ENCODE measurements at regions of chr1 and their contacts with region 1.

Region 1: GRCh38 chr1:154272217-154272998 is at the start of gene HAX1:
- DNase-seq: peak; percentile 82 to 90
- ATAC-seq: peak; percentile 88 to 92
- H3K4me3 ChIP-seq: peak within 1 kb of the TSS; percentile 75 to 98 (median 84)
- H3K27ac ChIP-seq: peak within 1 kb of the TSS; percentile 87 to 93 (median 90)
- H3K4me1 ChIP-seq: peaks cover 7 to 11% of the 10 kb centered on the region in 2 donors
- H3K27me3 ChIP-seq: no peaks in the 10 kb centered on the region
- CTCF ChIP-seq: peak; percentile 82 to 94 (median 87)
- POLR2A ChIP-seq: peak; percentile 52 to 59
- total RNA-seq, gene HAX1: 145 to 205 (median 177) TPM

Region 2: DNA sequence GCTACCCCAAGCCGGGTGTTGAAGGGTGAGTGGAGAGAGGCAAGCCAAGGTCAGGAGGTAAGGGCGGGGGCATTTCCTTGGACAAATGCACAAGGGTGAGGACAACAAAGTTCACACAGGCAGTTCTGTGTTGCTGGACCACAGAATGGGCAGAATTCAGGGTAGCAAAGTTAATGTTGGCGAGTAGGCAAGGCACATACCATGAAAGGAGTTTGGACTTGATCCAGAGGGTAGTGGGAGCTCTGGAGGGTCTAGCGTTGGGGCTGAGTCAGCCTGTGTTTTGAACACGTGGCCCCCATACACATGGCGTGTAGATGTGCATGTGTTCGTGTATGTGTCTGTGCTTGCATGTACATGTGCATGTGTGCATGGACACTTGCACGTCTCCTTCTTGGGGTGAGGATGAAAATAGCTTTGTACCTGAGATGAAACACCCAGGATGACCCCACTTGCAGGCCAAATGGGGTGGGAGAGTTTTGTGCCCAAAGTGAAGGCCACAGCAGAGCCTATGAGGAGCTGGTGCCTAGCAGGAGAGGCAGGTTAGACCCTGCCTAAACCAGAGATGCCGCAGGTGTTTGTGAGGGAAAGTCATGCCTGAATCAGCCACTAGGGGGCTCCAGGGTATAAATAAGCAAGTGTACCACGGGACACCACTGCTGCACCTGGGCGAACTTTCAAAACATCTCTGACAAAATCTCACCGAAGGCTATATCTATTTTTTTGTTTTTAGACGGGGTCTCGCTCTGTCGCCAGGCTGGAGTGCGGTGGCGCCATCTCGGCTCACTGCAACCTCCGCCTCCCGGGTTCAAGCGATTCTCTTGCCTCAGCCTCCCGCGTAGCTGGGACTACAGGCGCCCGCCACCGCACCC is 475.4 kb before region 1 on chr1:
- in situ Hi-C with region 1: no loop called
- intact Hi-C with region 1: loop called (anchors 5 kb)
- DNase-seq: peak; percentile 62 to 81
- ATAC-seq: peak; percentile 89 to 91
- H3K4me3 ChIP-seq: no peak overlapping the region
- H3K27ac ChIP-seq: no peak overlapping the region
- H3K4me1 ChIP-seq: no peaks in the 10 kb centered on the region
- H3K27me3 ChIP-seq: no peaks in the 10 kb centered on the region
- CTCF ChIP-seq: peak; percentile 86 to 98 (median 94)
- POLR2A ChIP-seq: no peak

Region 3: GRCh38 chr1:154129391-154129970 is 142.9 kb before region 1 on chr1:
- in situ Hi-C with region 1: no loop called
- intact Hi-C with region 1: no loop called
- DNase-seq: no peak
- ATAC-seq: no peak
- H3K4me3 ChIP-seq: no peak overlapping the region
- H3K27ac ChIP-seq: no peak overlapping the region
- H3K4me1 ChIP-seq: no peaks in the 10 kb centered on the region
- H3K27me3 ChIP-seq: no peaks in the 10 kb centered on the region
- CTCF ChIP-seq: no peak
- POLR2A ChIP-seq: no peak

Region 4: DNA sequence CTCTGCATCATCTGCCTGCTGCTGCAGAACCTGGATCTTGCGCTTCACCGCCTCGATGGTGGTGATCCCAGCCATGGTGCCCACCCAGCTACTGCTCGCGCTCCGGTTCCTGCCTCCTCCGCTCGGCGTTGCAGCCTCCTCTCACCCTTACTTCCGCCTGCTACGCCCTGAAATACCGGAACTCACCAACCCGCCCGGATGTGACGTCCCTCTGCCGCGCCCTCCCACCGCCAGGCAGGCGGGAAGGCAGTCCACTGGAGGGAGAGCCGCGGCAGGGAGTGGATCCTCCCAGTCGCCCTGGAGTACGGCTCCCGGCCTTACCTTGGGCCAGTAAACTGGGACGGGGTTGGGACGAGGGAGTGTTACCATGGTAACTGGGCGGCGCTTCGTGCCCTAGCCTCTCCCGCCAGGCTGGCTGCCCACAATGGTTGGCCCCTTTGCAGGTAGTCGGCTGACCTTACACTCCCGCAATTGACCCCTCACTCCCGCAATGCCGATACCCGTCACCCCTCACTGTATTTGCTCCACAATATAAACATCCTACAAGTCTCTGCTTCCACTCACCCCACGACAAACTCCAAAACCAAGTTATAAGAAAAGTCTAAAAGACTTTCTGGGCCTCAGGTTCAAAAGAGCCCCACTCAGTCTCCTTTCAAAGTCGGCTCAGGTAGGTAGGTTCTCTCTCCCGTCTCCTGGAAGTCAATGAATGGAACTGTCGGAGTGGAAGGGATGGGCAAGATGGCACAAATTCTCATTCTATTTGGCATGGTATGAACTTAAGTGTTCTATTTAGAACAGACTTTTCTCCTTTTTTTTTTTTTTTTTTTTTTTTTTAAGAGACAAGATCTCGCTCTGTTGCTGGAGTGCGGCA is 89.1 kb before region 1 on chr1:
- in situ Hi-C with region 1: loop called in 1 of 4 experiments (anchors 10 kb)
- intact Hi-C with region 1: loop called (anchors 1 kb)
- DNase-seq: peak; percentile 88 to 92
- ATAC-seq: peak; percentile 73 to 83
- H3K4me3 ChIP-seq: peak overlapping the region; percentile 69 to 89 (median 82)
- H3K27ac ChIP-seq: peak overlapping the region; percentile 86 to 93 (median 90)
- H3K4me1 ChIP-seq: peaks cover 60 to 61% of the 10 kb centered on the region in 2 donors
- H3K27me3 ChIP-seq: no peaks in the 10 kb centered on the region
- CTCF ChIP-seq: peak in 1 of 5 experiments; percentile 35
- POLR2A ChIP-seq: peak; percentile 94 to 96

Region 5: GRCh38 chr1:154198756-154199562 is 73.4 kb before region 1 on chr1:
- in situ Hi-C with region 1: loop called in 2 of 4 experiments (anchors 10 kb)
- intact Hi-C with region 1: loop called (anchors 1 kb)
- DNase-seq: no peak
- ATAC-seq: peak; percentile 50 to 59
- H3K4me3 ChIP-seq: no peak overlapping the region
- H3K27ac ChIP-seq: peak overlapping the region; percentile 86 to 93 (median 90)
- H3K4me1 ChIP-seq: peaks cover 7 to 13% of the 10 kb centered on the region in 2 donors
- H3K27me3 ChIP-seq: no peaks in the 10 kb centered on the region
- CTCF ChIP-seq: peak in 3 of 5 experiments; percentile 39 to 58 (median 51)
- POLR2A ChIP-seq: no peak

Region 6: DNA sequence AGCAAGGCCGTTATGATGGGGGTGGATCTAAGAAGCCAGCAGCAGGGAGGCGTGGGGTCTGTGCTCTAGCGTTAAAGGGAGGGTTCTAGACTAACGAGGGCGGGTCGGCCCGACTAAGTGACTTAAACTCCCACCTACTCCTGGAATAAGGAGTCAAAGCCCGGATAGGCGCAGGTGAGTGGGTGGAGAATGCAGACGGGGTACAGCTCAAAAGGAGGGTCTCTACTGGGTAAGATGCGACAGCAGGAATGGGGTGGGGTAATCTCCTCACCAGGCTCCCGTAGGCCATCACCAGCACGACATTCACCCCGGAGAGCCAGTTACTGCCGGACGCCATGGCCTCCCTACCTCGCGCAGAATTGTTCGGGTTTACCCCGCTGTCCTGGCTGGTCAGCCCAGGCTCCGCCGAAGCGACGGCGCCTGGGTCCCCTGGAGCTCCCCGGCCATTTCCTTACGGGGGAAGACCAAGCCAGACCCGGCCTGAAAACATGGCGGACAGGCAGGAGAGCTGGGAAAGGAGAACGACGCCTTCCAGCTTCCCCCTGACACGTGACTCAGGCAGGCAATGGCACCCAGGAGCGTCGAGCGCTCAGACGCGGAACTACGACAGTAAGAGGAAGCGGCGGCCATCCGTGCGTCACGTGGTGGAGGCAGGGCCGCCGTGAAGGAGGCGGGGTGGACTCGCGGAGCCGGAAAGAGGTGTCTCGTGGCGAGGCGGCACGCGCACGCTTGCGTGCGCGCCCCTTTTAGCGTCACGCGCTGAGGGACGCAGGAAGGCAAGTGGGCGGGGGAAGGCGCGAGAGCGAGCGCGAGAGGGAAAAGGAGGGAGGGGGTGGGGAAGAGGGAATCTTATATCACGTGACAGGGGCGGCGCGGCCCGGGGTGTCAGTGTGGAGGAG is 52.1 kb before region 1 on chr1 and contains the start of gene UBAP2L:
- in situ Hi-C with region 1: loop called in 1 of 4 experiments (anchors 10 kb)
- intact Hi-C with region 1: loop called (anchors 10 kb)
- DNase-seq: peak; percentile 99
- ATAC-seq: peak; percentile 91 to 93
- H3K4me3 ChIP-seq: peak within 1 kb of the TSS; percentile 82 to 96 (median 88)
- H3K27ac ChIP-seq: peak within 1 kb of the TSS; percentile 96 to 100 (median 98)
- H3K4me1 ChIP-seq: peaks cover 57 to 63% of the 10 kb centered on the region in 2 donors
- H3K27me3 ChIP-seq: no peaks in the 10 kb centered on the region
- CTCF ChIP-seq: no peak
- POLR2A ChIP-seq: peak; percentile 87 to 92
- total RNA-seq, gene UBAP2L: 38.5 to 72.8 (median 50.8) TPM

Region 7: DNA sequence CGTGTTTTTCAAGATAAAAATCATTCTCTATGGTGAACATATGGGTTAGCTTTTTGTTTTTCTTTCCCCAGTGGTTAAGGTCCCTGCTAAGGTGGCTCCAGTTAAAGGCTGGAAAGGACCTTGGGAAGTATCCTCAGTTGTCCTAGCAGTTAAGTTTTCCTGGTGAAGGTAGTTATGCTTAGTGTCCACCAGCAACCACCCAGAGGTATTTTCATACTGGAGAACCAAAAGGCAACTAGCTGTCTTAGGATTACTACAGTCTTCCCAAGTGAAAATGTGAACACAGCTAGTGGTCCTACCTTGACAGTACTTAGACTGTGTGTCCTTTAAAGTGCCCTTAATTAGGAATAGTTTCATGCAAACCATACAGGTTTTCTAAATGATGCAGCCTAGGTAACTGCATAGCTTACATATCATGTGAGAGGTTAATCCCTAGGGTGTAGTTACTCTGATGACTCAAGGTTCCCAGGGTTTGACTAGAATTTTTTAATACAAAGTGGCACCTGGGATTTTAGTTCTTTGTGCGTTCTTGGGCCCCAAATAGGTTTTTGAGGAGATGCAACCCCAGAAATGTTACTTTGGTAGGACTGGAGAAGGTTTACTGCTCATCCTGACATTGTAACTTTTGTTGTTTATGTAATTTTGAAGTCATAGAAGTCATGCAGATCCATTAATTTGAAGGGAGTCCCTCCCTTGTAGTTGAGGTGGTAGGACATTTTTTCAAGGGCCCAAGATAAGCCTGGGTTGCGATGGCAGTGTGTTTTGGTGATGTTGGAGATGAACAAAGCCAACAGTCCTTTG is 1379.7 kb after region 1 on chr1:
- in situ Hi-C with region 1: loop called in 1 of 4 experiments (anchors 25 kb)
- intact Hi-C with region 1: no loop called
- DNase-seq: no peak
- ATAC-seq: no peak
- H3K4me3 ChIP-seq: no peak overlapping the region
- H3K27ac ChIP-seq: peak overlapping the region in 1 of 4 donors; percentile 31
- H3K4me1 ChIP-seq: no peaks in the 10 kb centered on the region
- H3K27me3 ChIP-seq: peaks cover 0 to 7% (median 0%) of the 10 kb centered on the region in 3 donors
- CTCF ChIP-seq: no peak
- POLR2A ChIP-seq: no peak

Measured in gastrocnemius medialis (tissue), 4 donors.